Aorta (tissue), 5 donors: ENCODE measurements at regions of chr11 and their contacts with region 1.

Region 1: GRCh38 chr11:73242251-73243079 is 24.4 kb downstream of the P2RY2 start:
- DNase-seq: peak; percentile 83 to 95
- ATAC-seq: peak; percentile 82
- H3K4me3 ChIP-seq: no peak overlapping the region
- H3K27ac ChIP-seq: no peak overlapping the region
- H3K4me1 ChIP-seq: no peaks in the 10 kb centered on the region
- H3K27me3 ChIP-seq: no peaks in the 10 kb centered on the region

Region 2: GRCh38 chr11:72534565-72535547 is 707.6 kb before region 1 on chr11:
- intact Hi-C with region 1: no loop called
- DNase-seq: no peak
- ATAC-seq: no peak
- H3K4me3 ChIP-seq: no peak overlapping the region
- H3K27ac ChIP-seq: no peak overlapping the region
- H3K4me1 ChIP-seq: no peaks in the 10 kb centered on the region
- H3K27me3 ChIP-seq: no peaks in the 10 kb centered on the region

Region 3: GRCh38 chr11:72821883-72822799 is 420.3 kb before region 1 on chr11:
- intact Hi-C with region 1: loop called in 1 of 2 experiments (anchors 10 kb)
- DNase-seq: peak; percentile 89 to 96
- ATAC-seq: peak; percentile 92
- H3K4me3 ChIP-seq: peak overlapping the region; percentile 2 to 51
- H3K27ac ChIP-seq: peak overlapping the region in 1 of 2 donors; percentile 43
- H3K4me1 ChIP-seq: no peaks in the 10 kb centered on the region
- H3K27me3 ChIP-seq: no peaks in the 10 kb centered on the region

Region 4: GRCh38 chr11:72831513-72832300 is 410.8 kb before region 1 on chr11:
- intact Hi-C with region 1: loop called (anchors 5 to 10 kb)
- DNase-seq: peak; percentile 88 to 94
- ATAC-seq: peak; percentile 88
- H3K4me3 ChIP-seq: no peak overlapping the region
- H3K27ac ChIP-seq: peak overlapping the region; percentile 85 to 91
- H3K4me1 ChIP-seq: peaks cover 7 to 12% of the 10 kb centered on the region in 2 donors
- H3K27me3 ChIP-seq: no peaks in the 10 kb centered on the region

Region 5: GRCh38 chr11:73184953-73185671 is 57.4 kb before region 1 on chr11:
- intact Hi-C with region 1: loop called (anchors 1 to 5 kb)
- DNase-seq: peak; percentile 83 to 88
- ATAC-seq: peak; percentile 81
- H3K4me3 ChIP-seq: no peak overlapping the region
- H3K27ac ChIP-seq: peak overlapping the region in 1 of 2 donors; percentile 39
- H3K4me1 ChIP-seq: no peaks in the 10 kb centered on the region
- H3K27me3 ChIP-seq: no peaks in the 10 kb centered on the region

Region 6: GRCh38 chr11:73288873-73289707 is 46.6 kb after region 1 on chr11:
- intact Hi-C with region 1: loop called in 1 of 2 experiments (anchors 2 kb)
- DNase-seq: peak; percentile 90
- ATAC-seq: peak; percentile 91
- H3K4me3 ChIP-seq: no peak overlapping the region
- H3K27ac ChIP-seq: peak overlapping the region in 1 of 2 donors; percentile 22
- H3K4me1 ChIP-seq: no peaks in the 10 kb centered on the region
- H3K27me3 ChIP-seq: no peaks in the 10 kb centered on the region